K562 (cell line): ENCODE measurements at regions of chr12 and their contacts with region 1.

Region 1: DNA sequence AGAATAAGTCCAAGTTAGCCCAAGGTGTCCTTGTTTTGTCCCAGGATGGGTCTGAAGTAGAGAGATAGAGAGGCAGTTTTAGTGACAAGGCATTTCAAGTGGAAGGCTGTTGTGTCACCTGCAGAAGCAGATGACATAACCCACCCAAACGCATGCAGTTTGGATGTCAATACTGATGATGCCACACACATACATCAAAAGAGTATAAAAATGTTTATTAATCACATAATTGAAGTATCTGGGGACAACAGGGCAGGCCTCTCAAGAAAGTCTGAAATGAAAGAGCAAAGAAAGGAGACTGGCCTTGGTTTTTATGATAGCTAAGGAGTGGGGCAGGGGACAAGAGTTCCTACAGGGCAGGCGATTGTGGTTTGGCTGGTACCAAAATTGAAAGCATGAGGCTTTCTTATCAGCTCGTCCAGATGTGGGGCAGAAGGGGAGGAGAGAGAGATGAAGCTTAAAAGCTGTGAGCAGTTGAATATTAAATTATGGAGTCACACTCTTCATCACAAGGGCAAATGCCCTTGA is 78.4 kb upstream of the TSPAN8 start:
- DNase-seq: peak; percentile 77 to 91 (median 82)
- ATAC-seq: peak; percentile 90
- H3K4me3 ChIP-seq: no peak overlapping the region
- H3K27ac ChIP-seq: peak overlapping the region; percentile 78
- H3K4me1 ChIP-seq: peaks cover 9 to 38% of the 10 kb centered on the region in 2 experiments
- H3K27me3 ChIP-seq: no peaks in the 10 kb centered on the region
- CTCF ChIP-seq: no peak
- EP300 ChIP-seq: peak; percentile 83
- POLR2A ChIP-seq: no peak
- RAD21 ChIP-seq: peak; percentile 2 to 11; a peak in 1 of 4 replicates

Region 2: GRCh38 chr12:71019282-71019831 is 216.8 kb before region 1 on chr12:
- CTCF ChIA-PET with region 1: no interaction called
- POLR2A ChIA-PET with region 1: no interaction called
- in situ Hi-C with region 1: no loop called
- intact Hi-C with region 1: no loop called
- DNase-seq: no peak
- ATAC-seq: no peak
- H3K4me3 ChIP-seq: no peak overlapping the region
- H3K27ac ChIP-seq: no peak overlapping the region
- H3K4me1 ChIP-seq: no peaks in the 10 kb centered on the region
- H3K27me3 ChIP-seq: no peaks in the 10 kb centered on the region
- CTCF ChIP-seq: no peak
- EP300 ChIP-seq: no peak
- POLR2A ChIP-seq: no peak
- RAD21 ChIP-seq: 0 out of 4 replicates have a peak, but pooled peaks of 1 of the 2 experiments have one; percentile 4

Region 3: GRCh38 chr12:71299541-71300376 is 63.6 kb after region 1 on chr12:
- CTCF ChIA-PET with region 1: no interaction called
- POLR2A ChIA-PET with region 1: no interaction called
- in situ Hi-C with region 1: no loop called
- intact Hi-C with region 1: loop called (anchors 5 kb)
- DNase-seq: peak; percentile 21 to 89 (median 50)
- ATAC-seq: peak; percentile 87
- H3K4me3 ChIP-seq: no peak overlapping the region
- H3K27ac ChIP-seq: peak overlapping the region; percentile 59
- H3K4me1 ChIP-seq: peaks cover 11 to 43% of the 10 kb centered on the region in 2 experiments
- H3K27me3 ChIP-seq: no peaks in the 10 kb centered on the region
- CTCF ChIP-seq: no peak
- EP300 ChIP-seq: peak; percentile 89
- POLR2A ChIP-seq: no peak
- RAD21 ChIP-seq: no peak